HCT116 (cell line): ENCODE measurements at regions of chr1 and their contacts with region 1.

Region 1: DNA sequence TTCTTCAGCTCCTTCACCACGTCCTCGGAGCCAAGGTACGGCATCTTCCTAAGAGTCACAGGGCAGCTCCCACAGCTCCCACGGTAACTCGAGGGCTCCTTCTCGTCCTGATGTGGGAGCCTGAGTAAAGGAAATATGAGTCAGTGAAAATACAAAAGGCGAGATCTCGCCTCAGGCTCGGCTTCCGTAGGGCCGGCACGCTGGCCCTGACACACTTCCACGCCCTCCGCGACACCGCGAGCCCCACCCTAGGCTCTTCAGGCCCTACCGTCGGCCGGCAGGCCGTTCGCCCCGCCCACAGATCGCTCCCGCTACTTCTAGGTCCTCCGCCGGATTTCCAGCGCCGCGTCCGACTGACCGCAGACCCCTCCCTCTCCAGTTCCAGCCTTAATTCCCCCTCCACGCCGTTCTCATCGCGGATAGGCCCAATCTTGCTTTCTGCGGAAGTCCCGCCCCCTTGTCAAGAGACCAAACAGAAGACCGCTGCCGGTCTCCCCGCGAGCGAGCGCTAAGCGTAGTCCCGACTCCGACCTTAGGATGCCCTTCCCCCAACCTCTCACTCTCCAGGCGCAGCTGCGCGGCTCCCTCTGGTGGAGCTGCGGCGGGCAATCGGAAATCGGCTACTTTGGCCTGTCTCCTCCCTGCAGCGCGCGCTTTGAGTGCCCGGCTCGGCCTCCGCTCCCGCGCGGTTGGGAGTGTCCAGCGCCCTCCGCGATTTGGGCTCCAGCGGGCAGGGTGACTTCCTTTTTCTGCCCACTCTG is at the starts of genes AP4B1 and DCLRE1B:
- DNase-seq: peak; percentile 99
- ATAC-seq: peak; percentile 92
- H3K4me3 ChIP-seq: peak within 1 kb of the TSS; percentile 99
- H3K27ac ChIP-seq: peak within 1 kb of the TSS; percentile 83
- H3K4me1 ChIP-seq: peaks cover 4 to 15% of the 10 kb centered on the region in 2 experiments; a peak in 3 of 4 replicates
- H3K27me3 ChIP-seq: no peaks in the 10 kb centered on the region
- CTCF ChIP-seq: peak; percentile 54 to 77 (median 54); a peak in 5 of 6 replicates
- POLR2A ChIP-seq: peak; percentile 63
- RAD21 ChIP-seq: peak; percentile 93
- total RNA-seq, gene AP4B1: 11.1 TPM
- total RNA-seq, gene DCLRE1B: 13.4 TPM

Region 2: DNA sequence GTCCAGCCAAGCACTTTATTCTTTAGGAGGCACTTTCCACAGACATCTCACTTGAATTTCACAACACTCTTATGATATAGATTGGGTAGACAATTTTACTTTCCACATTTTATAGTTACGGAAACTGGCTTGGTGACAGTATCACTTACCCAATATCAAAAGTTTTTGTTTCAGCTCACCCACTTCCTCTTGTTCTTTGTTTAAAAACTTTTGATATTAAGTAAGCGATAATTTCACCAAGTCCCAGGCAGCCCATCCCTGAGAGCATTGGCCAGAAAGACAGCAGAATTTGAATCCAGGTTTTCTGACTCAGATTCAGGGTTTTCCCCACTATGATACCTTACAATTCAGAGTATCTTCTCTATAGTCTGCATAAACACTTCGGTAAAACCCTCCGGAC is 771.8 kb before region 1 on chr1:
- CTCF ChIA-PET with region 1: no interaction called
- POLR2A ChIA-PET with region 1: no interaction called
- RAD21 ChIA-PET with region 1: no interaction called
- intact Hi-C with region 1: loop called (anchors 10 kb)
- DNase-seq: no peak
- ATAC-seq: no peak
- H3K4me3 ChIP-seq: no peak overlapping the region
- H3K27ac ChIP-seq: no peak overlapping the region
- H3K4me1 ChIP-seq: no peaks in the 10 kb centered on the region
- H3K27me3 ChIP-seq: no peaks in the 10 kb centered on the region
- CTCF ChIP-seq: no peak
- POLR2A ChIP-seq: no peak
- RAD21 ChIP-seq: no peak

Region 3: GRCh38 chr1:113811888-113812660 is 92.8 kb before region 1 on chr1 and contains the start of gene RSBN1:
- CTCF ChIA-PET with region 1: no interaction called
- POLR2A ChIA-PET with region 1: no interaction called
- RAD21 ChIA-PET with region 1: no interaction called
- intact Hi-C with region 1: loop called (anchors 1 kb)
- DNase-seq: peak; percentile 98
- ATAC-seq: peak; percentile 97
- H3K4me3 ChIP-seq: peak within 1 kb of the TSS; percentile 81 to 82
- H3K27ac ChIP-seq: peak within 1 kb of the TSS; percentile 76
- H3K4me1 ChIP-seq: peaks cover 15 to 27% of the 10 kb centered on the region in 2 experiments
- H3K27me3 ChIP-seq: no peaks in the 10 kb centered on the region
- CTCF ChIP-seq: no peak
- POLR2A ChIP-seq: peak; percentile 86
- RAD21 ChIP-seq: no peak
- total RNA-seq, gene RSBN1: 16.6 TPM

Region 4: GRCh38 chr1:113835642-113836307 is 69.1 kb before region 1 on chr1:
- CTCF ChIA-PET with region 1: no interaction called
- POLR2A ChIA-PET with region 1: no interaction called
- RAD21 ChIA-PET with region 1: no interaction called
- intact Hi-C with region 1: loop called (anchors 5 kb)
- DNase-seq: peak; percentile 36
- ATAC-seq: no peak
- H3K4me3 ChIP-seq: no peak overlapping the region
- H3K27ac ChIP-seq: no peak overlapping the region
- H3K4me1 ChIP-seq: no peaks in the 10 kb centered on the region
- H3K27me3 ChIP-seq: no peaks in the 10 kb centered on the region
- CTCF ChIP-seq: peak; percentile 31 to 73 (median 52); a peak in 3 of 6 replicates
- POLR2A ChIP-seq: no peak
- RAD21 ChIP-seq: peak; percentile 82

Region 5: GRCh38 chr1:113928941-113929749 is 24.3 kb after region 1 on chr1 and contains the start of gene HIPK1:
- CTCF ChIA-PET with region 1: interaction called, 5 read pairs
- POLR2A ChIA-PET with region 1: interaction called, 24 read pairs
- RAD21 ChIA-PET with region 1: interaction called in 1 of 2 experiments, 3 read pairs
- intact Hi-C with region 1: loop called (anchors 1 kb)
- DNase-seq: peak; percentile 69
- ATAC-seq: peak; percentile 79
- H3K4me3 ChIP-seq: peak within 1 kb of the TSS; percentile 74 to 84
- H3K27ac ChIP-seq: peak within 1 kb of the TSS; percentile 48
- H3K4me1 ChIP-seq: peaks cover 13 to 29% of the 10 kb centered on the region in 2 experiments; a peak in 3 of 4 replicates
- H3K27me3 ChIP-seq: no peaks in the 10 kb centered on the region
- CTCF ChIP-seq: no peak
- POLR2A ChIP-seq: peak; percentile 18
- RAD21 ChIP-seq: no peak
- total RNA-seq, gene HIPK1: 40.1 TPM

Region 6: DNA sequence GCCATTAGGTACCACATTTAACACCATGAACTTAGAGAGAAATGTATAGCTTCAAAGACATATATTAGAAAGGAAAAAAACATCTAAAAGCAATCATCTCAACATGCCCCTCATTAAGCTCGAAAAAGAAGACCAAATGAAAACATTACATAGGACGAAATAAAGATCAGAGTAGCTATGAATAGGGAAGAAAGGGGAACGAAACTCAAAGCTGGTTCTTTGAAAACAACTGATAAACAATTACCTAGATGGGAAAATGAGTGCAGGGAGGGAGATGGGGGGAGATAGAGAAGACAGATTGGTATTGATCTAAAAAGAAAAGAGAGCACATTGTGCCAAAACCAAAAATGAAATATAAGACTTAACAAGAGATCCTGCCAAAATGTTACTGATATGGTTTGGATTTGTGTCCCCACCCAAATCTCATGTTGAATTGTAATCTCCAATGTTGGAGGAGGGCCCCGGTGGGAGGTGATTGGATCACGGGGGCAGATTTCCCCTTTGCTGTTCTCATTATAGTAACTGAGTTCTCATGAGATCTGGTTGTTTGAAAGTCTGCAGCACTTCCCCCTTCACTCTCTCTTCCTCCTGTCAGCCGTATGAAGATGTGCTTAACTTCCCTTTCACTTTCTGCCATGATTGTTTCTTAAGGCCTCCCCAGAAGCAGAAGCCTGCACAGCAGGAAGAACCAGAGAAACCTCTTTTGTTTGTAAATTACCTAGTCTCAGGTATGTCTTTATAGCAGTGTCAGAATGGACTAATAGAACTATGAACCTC is 577.5 kb after region 1 on chr1:
- CTCF ChIA-PET with region 1: no interaction called
- POLR2A ChIA-PET with region 1: no interaction called
- RAD21 ChIA-PET with region 1: no interaction called
- intact Hi-C with region 1: no loop called
- DNase-seq: no peak
- ATAC-seq: no peak
- H3K4me3 ChIP-seq: no peak overlapping the region
- H3K27ac ChIP-seq: no peak overlapping the region
- H3K4me1 ChIP-seq: peaks cover 0 to 7% of the 10 kb centered on the region in 2 experiments; a peak in 1 of 4 replicates
- H3K27me3 ChIP-seq: no peaks in the 10 kb centered on the region
- CTCF ChIP-seq: no peak
- POLR2A ChIP-seq: no peak
- RAD21 ChIP-seq: no peak